ENCODE measurements at regions of chr19 and their contacts with region 1.

Region 1: DNA sequence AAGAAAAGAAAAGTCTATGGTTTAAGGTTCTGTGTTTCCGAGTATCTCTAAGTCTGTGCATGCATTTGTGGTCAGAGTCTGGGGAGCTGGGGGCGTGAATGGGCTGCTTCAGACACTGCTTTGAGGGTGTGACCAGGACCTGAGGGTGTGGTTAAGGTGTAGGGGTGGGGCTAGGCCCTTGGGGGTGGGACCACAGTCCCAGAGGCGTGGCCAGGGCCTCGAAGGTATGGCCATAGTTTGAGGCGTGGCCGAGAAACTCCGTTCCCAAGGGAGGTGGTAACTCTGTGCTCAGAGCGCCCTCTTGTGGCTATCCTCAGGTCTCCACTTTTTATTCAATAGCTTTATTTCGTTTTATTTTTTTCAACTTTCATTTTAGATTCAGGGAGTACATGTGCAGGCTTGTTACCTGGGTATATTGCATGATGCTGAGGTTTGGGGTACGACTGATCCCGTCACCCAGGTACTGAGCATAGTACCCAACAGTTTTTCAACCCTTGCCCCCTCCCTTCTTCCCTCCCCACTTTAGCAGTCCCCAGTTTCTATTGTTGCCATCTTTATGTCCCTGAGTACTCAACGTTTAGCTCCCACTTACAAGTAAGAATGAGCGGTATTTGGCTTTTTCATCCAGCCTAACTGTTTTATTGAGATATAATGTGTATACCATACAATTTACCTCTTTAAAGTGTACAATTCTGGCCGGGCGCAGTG is 7.0 kb upstream of the CBLC start:
- DNase-seq: peak; percentile 99
- H3K4me3 ChIP-seq: peak overlapping the region in 3 of 8 donors; percentile 7 to 25 (median 16)
- H3K27ac ChIP-seq: peak overlapping the region in 6 of 8 donors; percentile 20 to 82 (median 66)
- H3K4me1 ChIP-seq: peaks cover 0 to 53% (median 34%) of the 10 kb centered on the region in 6 donors
- H3K27me3 ChIP-seq: no peaks in the 10 kb centered on the region
- CTCF ChIP-seq: peak; percentile 58 to 98 (median 88)
- POLR2A ChIP-seq: no peak

Region 2: DNA sequence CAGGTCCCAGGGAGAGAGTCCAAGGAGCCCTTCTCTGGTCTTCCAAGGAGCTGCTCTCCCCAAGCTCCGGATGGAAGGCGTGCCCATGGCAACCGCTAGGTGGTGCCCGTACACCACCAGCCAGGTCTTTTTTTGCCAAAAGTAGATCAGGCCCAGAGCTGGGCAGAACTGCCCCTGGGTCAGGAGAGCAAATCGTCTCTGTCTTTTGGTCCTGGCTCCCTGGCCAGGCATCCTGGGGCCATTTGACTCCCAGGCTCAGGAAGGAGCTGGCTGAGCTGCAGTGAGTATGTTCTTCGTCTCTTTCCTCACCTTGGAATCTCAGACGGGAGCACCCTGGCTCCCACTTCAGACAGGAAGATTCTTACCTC is 46.8 kb before region 1 on chr19:
- intact Hi-C with region 1: loop called (anchors 2 kb)
- DNase-seq: peak; percentile 95
- H3K4me3 ChIP-seq: no peak overlapping the region
- H3K27ac ChIP-seq: peak overlapping the region in 7 of 8 donors; percentile 36 to 77 (median 56)
- H3K4me1 ChIP-seq: peaks cover 34 to 94% (median 67%) of the 10 kb centered on the region in 6 donors
- H3K27me3 ChIP-seq: no peaks in the 10 kb centered on the region
- CTCF ChIP-seq: peak; percentile 92 to 99 (median 97)
- POLR2A ChIP-seq: no peak

Measured in spleen (tissue), 13 donors.